CD8-positive, alpha-beta memory T cell (primary cell): ENCODE measurements at regions of chr2 and their contacts with region 1.

Region 1: DNA sequence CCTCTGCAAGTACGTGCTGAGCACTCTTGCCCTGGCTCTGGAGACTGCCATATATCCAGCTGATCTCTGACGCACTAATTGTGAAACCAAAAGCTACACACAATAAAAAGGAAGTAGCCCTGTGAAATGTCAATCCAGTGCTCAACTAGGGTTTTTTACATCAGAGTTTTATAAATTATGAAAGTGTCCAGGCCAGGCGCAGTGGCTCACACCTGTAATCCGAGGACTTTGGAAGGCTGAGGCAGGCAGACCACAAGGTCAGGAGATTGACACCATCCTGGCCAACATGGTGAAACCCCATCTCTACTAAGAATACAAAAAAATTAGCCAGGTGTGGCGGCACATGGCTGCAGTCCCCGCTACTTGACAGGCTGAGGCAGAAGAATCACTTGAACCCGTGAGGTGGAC is 24.5 kb upstream of the PEX13 start:
- DNase-seq: peak in 2 of 5 donors; percentile 57 to 63
- H3K4me3 ChIP-seq: peak overlapping the region; percentile 48
- H3K4me3 Mint-ChIP-seq: peak overlapping the region; percentile 29 to 90 (median 79)
- H3K27ac ChIP-seq: peak overlapping the region; percentile 26
- H3K27ac Mint-ChIP-seq: peak overlapping the region; percentile 74 to 97 (median 93)
- H3K4me1 ChIP-seq: peaks cover 8% of the 10 kb centered on the region
- H3K4me1 Mint-ChIP-seq: peaks cover 13 to 17% (median 16%) of the 10 kb centered on the region in 3 donors
- H3K27me3 ChIP-seq: no peaks in the 10 kb centered on the region
- H3K27me3 Mint-ChIP-seq: no peaks in the 10 kb centered on the region

Region 2: GRCh38 chr2:60659026-60659425 is 334.0 kb before region 1 on chr2:
- CTCF ChIA-PET with region 1: no interaction called
- POLR2A ChIA-PET with region 1: no interaction called
- DNase-seq: no peak
- H3K4me3 ChIP-seq: no peak overlapping the region
- H3K4me3 Mint-ChIP-seq: no peak overlapping the region
- H3K27ac ChIP-seq: no peak overlapping the region
- H3K27ac Mint-ChIP-seq: no peak overlapping the region
- H3K4me1 ChIP-seq: no peaks in the 10 kb centered on the region
- H3K4me1 Mint-ChIP-seq: no peaks in the 10 kb centered on the region
- H3K27me3 ChIP-seq: no peaks in the 10 kb centered on the region
- H3K27me3 Mint-ChIP-seq: peaks cover 3 to 37% of the 10 kb centered on the region in 2 donors

Region 3: GRCh38 chr2:60707750-60708371 is 285.1 kb before region 1 on chr2:
- CTCF ChIA-PET with region 1: interaction called, 77 read pairs
- POLR2A ChIA-PET with region 1: interaction called, 3 read pairs
- DNase-seq: peak in 2 of 5 donors; percentile 16 to 29
- H3K4me3 ChIP-seq: no peak overlapping the region
- H3K4me3 Mint-ChIP-seq: no peak overlapping the region
- H3K27ac ChIP-seq: no peak overlapping the region
- H3K27ac Mint-ChIP-seq: no peak overlapping the region
- H3K4me1 ChIP-seq: no peaks in the 10 kb centered on the region
- H3K4me1 Mint-ChIP-seq: no peaks in the 10 kb centered on the region
- H3K27me3 ChIP-seq: no peaks in the 10 kb centered on the region
- H3K27me3 Mint-ChIP-seq: peaks cover 2 to 20% of the 10 kb centered on the region in 2 donors

Region 4: DNA sequence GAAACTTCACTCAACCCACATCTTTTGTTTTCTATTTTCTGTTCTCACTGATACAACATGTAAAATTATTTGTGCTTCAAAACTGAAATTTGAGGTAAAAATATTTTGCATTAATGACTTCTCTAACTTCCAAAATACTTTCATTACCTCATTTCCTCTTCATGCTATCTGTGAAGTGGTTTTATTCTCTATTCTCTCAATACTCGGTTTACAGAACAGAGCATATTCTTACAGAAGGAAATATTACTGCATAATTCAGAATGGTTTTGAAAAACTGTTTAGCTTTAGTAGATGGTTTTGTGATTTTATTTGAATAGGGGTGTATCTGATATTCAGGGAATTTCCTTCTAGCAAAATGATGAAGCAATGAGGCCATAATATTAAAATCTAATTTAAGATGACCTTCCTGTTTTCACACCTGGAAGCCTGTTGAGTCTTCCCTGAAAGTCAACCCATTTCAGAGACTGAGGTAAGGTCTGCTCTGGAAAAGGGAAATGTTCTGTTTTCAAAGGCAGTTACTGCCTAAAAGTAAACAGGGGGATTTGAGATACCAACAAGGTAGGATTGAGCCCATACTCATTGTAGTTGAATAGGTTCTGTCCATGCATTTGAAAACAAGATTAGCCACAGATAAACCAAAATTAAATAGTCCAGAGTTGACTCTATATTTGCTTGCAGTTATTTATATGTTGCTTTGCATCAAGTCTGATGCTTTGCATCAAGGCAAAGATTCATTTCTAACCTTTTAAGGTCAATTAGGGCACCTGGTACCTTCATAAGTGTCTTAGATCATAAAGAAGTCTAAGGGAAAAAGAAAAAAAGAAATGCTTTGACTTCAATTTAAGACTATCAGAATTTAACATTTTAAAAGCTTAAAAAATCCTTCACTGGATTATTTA is 26.2 kb before region 1 on chr2:
- CTCF ChIA-PET with region 1: interaction called, 16 read pairs
- POLR2A ChIA-PET with region 1: interaction called, 13 read pairs
- DNase-seq: peak in 1 of 5 donors; percentile 17
- H3K4me3 ChIP-seq: no peak overlapping the region
- H3K4me3 Mint-ChIP-seq: peak overlapping the region in 6 of 7 donors; percentile 32 to 75 (median 50)
- H3K27ac ChIP-seq: no peak overlapping the region
- H3K27ac Mint-ChIP-seq: peak overlapping the region; percentile 36 to 88 (median 84)
- H3K4me1 ChIP-seq: peaks cover 40% of the 10 kb centered on the region
- H3K4me1 Mint-ChIP-seq: peaks cover 44 to 58% (median 58%) of the 10 kb centered on the region in 3 donors
- H3K27me3 ChIP-seq: no peaks in the 10 kb centered on the region
- H3K27me3 Mint-ChIP-seq: no peaks in the 10 kb centered on the region

Region 5: DNA sequence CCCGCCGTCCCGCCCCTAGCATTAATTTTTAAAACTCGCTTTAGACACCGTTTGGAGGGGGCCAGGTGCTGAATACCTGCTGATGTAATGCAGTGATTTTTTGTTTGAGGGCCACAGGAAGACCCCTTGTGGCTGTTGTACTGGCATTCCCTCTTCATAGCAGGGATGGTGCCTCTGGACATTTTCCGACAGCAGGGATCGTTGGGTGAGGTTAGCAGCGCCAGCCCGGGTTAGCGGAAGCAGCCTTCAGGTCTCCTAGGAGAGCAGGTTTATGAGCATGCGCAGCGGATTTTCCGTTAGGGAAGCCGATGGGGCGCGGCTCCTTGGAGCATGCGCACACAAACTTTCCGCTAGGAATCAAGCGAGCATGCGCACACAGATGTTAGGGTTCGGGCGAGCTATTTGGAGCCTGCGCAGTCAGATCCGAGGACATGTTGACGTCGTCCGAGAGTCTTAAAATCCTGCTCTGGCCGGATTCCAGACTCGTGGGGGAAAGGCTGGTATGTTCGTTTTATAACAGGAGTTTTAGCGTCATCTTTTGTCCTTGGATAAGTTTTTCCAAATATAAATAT is 151.8 kb after region 1 on chr2:
- CTCF ChIA-PET with region 1: no interaction called
- POLR2A ChIA-PET with region 1: no interaction called
- DNase-seq: peak; percentile 87 to 95 (median 91)
- H3K4me3 ChIP-seq: peak overlapping the region; percentile 80
- H3K4me3 Mint-ChIP-seq: peak overlapping the region; percentile 88 to 98 (median 94)
- H3K27ac ChIP-seq: peak overlapping the region; percentile 32
- H3K27ac Mint-ChIP-seq: peak overlapping the region; percentile 84 to 98 (median 96)
- H3K4me1 ChIP-seq: peaks cover 9% of the 10 kb centered on the region
- H3K4me1 Mint-ChIP-seq: peaks cover 10 to 15% (median 15%) of the 10 kb centered on the region in 3 donors
- H3K27me3 ChIP-seq: no peaks in the 10 kb centered on the region
- H3K27me3 Mint-ChIP-seq: peaks cover 0 to 3% of the 10 kb centered on the region in 2 donors